ENCODE measurements at regions of chr11 and their contacts with region 1.

Region 1: DNA sequence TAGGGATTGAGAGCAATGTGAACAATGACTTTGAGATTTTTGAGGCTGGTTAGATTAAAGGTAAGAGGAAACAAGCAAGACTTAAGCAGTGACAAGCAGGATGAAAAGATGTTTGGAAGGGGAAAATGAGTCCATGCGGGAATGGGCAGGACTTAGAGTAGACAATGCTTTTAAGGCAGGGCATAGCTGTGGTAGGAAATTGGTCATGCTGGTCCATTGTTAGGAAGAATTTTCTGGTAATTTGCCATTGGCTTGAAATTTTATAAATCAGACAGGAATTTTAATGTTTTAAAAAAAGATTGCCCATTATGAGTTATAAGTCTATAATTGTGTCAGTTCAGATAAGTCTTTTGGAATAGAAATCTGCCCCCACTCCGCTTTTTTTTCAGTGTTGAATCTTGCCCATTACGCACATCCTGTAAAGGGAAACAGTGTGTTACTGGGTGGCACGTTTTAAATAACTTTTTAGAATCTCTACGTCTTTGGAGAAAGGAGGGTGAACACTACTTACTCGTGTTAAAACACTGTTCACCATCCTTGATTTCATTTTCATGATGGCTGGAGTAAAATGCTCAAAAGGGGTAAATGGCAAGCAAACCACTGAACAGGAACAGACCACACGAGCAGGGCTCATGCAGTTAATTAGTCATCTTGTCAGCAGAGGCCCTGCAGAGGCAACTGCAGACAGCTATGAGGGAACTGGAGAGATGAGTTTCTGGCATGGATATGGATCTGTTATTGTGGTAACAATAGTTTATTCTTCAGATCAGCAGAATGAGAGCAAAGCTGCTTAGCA is 25.0 kb downstream of the SWAP70 start:
- DNase-seq: peak; percentile 78
- ATAC-seq: peak; percentile 74
- H3K4me3 ChIP-seq: peak overlapping the region in 4 of 5 experiments; percentile 7 to 50 (median 26)
- H3K4me3 Mint-ChIP-seq: no peak overlapping the region
- H3K27ac ChIP-seq: peak overlapping the region; percentile 91 to 96
- H3K27ac Mint-ChIP-seq: no peak overlapping the region
- H3K4me1 ChIP-seq: peaks cover 85 to 88% of the 10 kb centered on the region in 2 donors
- H3K4me1 Mint-ChIP-seq: peaks cover 60% of the 10 kb centered on the region
- H3K27me3 ChIP-seq: no peaks in the 10 kb centered on the region
- H3K27me3 Mint-ChIP-seq: no peaks in the 10 kb centered on the region
- CTCF ChIP-seq: no peak

Region 2: GRCh38 chr11:9672288-9672916 is 16.5 kb before region 1 on chr11:
- CTCF ChIA-PET with region 1: interaction called, 12 read pairs
- POLR2A ChIA-PET with region 1: interaction called, 5 read pairs
- intact Hi-C with region 1: loop called (anchors 1 kb)
- DNase-seq: no peak
- ATAC-seq: no peak
- H3K4me3 ChIP-seq: peak overlapping the region in 1 of 5 experiments; percentile 33
- H3K4me3 Mint-ChIP-seq: peak overlapping the region; percentile 81
- H3K27ac ChIP-seq: peak overlapping the region; percentile 44 to 68
- H3K27ac Mint-ChIP-seq: no peak overlapping the region
- H3K4me1 ChIP-seq: peaks cover 72 to 80% of the 10 kb centered on the region in 2 donors
- H3K4me1 Mint-ChIP-seq: peaks cover 61% of the 10 kb centered on the region
- H3K27me3 ChIP-seq: no peaks in the 10 kb centered on the region
- H3K27me3 Mint-ChIP-seq: no peaks in the 10 kb centered on the region
- CTCF ChIP-seq: no peak

Region 3: GRCh38 chr11:9703280-9703679 is 14.4 kb after region 1 on chr11:
- CTCF ChIA-PET with region 1: no interaction called
- POLR2A ChIA-PET with region 1: interaction called, 3 read pairs
- intact Hi-C with region 1: loop called (anchors 2 kb)
- DNase-seq: peak; percentile 47
- ATAC-seq: no peak
- H3K4me3 ChIP-seq: no peak overlapping the region
- H3K4me3 Mint-ChIP-seq: peak overlapping the region; percentile 52
- H3K27ac ChIP-seq: peak overlapping the region; percentile 52 to 82
- H3K27ac Mint-ChIP-seq: peak overlapping the region; percentile 85
- H3K4me1 ChIP-seq: peaks cover 66 to 75% of the 10 kb centered on the region in 2 donors
- H3K4me1 Mint-ChIP-seq: peaks cover 66% of the 10 kb centered on the region
- H3K27me3 ChIP-seq: no peaks in the 10 kb centered on the region
- H3K27me3 Mint-ChIP-seq: no peaks in the 10 kb centered on the region
- CTCF ChIP-seq: no peak

Measured in B cell (primary cell).